GM18951 (cell line): ENCODE measurements at regions of chr19 and their contacts with region 1.

Region 1: DNA sequence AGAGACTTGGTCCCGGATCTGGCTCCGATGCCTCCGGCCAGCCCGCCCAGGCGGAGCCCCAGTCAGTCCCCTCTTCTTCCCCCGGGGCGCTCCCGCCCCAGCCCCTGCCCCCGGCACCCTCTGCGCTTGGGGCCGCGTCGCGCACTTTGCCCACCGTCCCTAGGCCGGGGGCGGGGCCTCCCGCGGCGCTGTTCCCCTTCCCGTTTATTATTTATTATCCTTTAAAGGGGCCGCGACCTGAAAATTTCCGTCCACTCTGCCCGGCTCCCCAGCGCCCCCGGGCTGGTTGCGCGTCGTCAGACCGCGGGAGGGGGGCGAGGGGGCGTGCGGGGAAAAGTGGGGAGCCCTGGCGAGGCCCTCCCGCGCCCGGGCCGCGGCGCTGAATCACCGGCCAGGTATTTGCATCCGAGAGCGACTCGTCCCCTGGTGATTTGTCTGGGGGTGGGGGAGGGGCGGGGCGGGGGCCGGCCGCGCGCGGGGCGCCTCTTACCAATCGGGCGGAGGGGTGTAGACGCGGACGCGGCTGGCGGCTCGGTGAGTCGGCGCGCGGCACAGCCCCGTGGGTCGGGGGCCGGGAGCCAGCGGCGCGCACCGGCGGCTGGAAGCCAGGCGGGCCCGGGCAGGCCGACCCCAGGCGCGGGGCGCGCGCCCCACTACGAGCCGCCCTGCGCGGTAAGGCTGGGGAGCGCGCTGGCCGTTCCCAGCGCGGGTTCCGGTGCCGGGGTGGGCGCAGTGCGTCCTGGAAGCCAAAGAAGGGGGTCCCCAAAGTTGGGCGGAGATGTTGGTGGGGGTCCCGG is at the start of gene ARID3A:
- POLR2A ChIP-seq: peak; percentile 62

Region 2: DNA sequence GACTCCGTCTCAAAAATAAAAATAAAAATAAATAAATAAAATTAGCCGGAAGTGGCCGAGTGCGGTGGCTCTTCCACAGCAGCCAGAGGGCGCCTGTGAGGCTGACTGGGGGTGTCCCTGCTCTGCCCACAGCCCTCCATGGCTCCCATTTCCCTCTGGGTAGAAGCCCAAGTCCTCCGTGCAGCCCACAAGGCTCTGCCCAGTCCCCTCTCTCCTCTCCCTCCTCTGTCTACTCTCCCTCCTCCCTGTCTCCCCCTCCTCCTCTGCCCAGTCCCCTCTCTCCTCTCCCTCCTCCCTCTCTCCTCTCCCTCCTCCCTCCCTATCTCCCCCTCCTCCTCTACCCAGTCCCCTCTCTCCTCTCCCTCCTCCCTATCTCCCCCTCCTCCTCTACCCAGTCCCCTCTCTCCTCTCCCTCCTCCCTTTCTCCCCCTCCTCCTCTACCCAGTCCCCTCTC is 154.4 kb before region 1 on chr19:
- in situ Hi-C with region 1: loop called (anchors 10 kb)
- POLR2A ChIP-seq: no peak